ENCODE measurements at regions of chr4 and their contacts with region 1.

Region 1: GRCh38 chr4:26836539-26836938 is 24.1 kb upstream of the STIM2 start:
- DNase-seq: no peak
- H3K4me3 ChIP-seq: no peak overlapping the region
- H3K27ac ChIP-seq: no peak overlapping the region
- H3K27me3 ChIP-seq: peaks cover 6% of the 10 kb centered on the region
- CTCF ChIP-seq: no peak

Region 2: DNA sequence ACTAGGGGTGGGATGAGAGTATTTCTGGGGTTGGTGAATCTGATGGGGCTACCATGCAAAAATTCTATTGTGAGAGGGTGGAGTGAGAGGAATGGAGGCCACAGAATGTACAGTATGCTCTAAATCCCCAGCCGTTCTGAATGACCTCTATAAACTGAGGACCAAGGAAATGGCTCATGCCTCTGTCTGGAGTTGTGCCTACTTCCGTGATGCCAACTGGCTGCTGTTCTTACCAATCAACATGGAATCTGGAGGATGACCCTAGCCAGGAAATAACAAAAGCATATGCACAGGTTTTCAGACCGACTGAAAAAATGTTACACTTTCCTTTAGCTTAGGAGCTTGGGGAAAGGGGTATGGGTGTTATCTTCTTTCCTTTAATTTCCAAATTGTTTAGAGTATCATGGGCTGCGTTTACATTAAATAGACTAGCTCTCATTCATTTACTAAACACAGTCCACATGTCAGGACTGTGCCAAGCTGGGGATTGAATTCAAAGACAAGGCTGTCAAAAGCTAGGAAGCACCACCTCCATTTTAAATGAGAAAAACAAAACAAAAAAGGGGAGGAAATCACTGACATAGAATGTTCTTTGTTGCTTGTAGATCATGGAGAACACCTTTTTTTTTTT is 326.1 kb before region 1 on chr4:
- CTCF ChIA-PET with region 1: no interaction called
- POLR2A ChIA-PET with region 1: interaction called, 10 read pairs
- DNase-seq: no peak
- H3K4me3 ChIP-seq: no peak overlapping the region
- H3K27ac ChIP-seq: peak overlapping the region; percentile 68
- H3K27me3 ChIP-seq: no peaks in the 10 kb centered on the region
- CTCF ChIP-seq: no peak

Region 3: DNA sequence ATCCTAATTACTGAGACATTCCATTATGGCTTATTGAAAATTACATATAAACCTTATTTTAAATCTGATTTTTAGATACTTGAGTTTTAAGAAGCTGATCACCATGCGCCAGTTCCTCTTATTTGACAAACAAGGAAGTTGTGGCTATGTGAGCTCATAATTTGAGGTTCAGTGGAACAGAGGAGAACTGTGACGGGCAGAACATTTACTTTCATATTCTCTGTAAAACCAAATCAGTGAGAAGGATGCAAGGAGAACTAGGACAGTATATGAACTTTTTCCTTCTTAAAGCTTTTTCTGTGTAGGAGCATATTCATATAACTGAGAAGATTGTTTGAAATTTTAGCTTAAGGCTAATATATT is 49.4 kb after region 1 on chr4:
- CTCF ChIA-PET with region 1: no interaction called
- POLR2A ChIA-PET with region 1: no interaction called
- DNase-seq: no peak
- H3K4me3 ChIP-seq: no peak overlapping the region
- H3K27ac ChIP-seq: no peak overlapping the region
- H3K27me3 ChIP-seq: no peaks in the 10 kb centered on the region
- CTCF ChIP-seq: no peak